Activated CD4-positive, alpha-beta T cell treated with anti-CD3 and anti-CD28 coated beads, Interleukin-2, amount 10 ng/mL, durations not matched to agents 7 days and 5 days (primary cell): ENCODE measurements at regions of chr1 and their contacts with region 1.

Region 1: GRCh38 chr1:101309334-101310311 is 72.8 kb downstream of the S1PR1 start:
- DNase-seq: peak; percentile 85
- H3K4me3 Mint-ChIP-seq: peak overlapping the region; percentile 73
- H3K27ac Mint-ChIP-seq: peak overlapping the region; percentile 98
- H3K4me1 Mint-ChIP-seq: peaks cover 75% of the 10 kb centered on the region
- H3K27me3 Mint-ChIP-seq: no peaks in the 10 kb centered on the region

Region 2: DNA sequence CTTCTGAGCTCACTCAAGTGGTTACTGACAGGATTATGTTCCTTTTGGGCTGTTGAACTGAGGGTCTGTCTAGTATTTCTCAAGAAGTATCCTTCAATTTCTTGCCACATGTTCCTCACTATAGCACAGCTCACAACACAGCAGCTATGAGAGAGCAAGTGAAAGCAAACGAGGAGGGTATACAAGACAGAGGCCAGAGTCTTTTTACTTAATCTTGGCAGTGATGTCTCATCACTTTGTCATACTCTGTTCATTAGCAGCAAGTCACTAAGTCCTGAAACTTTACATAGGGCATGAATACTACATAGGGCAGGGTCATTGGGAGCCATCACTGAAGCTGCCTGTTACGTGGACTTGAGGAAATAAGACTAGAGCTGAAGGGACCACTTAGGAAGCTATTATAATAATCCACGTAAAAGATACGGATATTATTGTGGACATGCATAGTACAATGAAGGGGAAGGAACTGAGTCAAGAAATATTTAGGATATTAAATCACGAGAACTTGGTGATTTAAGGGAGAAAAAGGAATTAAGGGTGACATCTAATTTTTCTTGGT is 350.0 kb before region 1 on chr1:
- CTCF ChIA-PET with region 1: no interaction called
- POLR2A ChIA-PET with region 1: no interaction called
- DNase-seq: no peak
- H3K4me3 Mint-ChIP-seq: no peak overlapping the region
- H3K27ac Mint-ChIP-seq: no peak overlapping the region
- H3K4me1 Mint-ChIP-seq: peaks cover 19% of the 10 kb centered on the region
- H3K27me3 Mint-ChIP-seq: no peaks in the 10 kb centered on the region

Region 3: DNA sequence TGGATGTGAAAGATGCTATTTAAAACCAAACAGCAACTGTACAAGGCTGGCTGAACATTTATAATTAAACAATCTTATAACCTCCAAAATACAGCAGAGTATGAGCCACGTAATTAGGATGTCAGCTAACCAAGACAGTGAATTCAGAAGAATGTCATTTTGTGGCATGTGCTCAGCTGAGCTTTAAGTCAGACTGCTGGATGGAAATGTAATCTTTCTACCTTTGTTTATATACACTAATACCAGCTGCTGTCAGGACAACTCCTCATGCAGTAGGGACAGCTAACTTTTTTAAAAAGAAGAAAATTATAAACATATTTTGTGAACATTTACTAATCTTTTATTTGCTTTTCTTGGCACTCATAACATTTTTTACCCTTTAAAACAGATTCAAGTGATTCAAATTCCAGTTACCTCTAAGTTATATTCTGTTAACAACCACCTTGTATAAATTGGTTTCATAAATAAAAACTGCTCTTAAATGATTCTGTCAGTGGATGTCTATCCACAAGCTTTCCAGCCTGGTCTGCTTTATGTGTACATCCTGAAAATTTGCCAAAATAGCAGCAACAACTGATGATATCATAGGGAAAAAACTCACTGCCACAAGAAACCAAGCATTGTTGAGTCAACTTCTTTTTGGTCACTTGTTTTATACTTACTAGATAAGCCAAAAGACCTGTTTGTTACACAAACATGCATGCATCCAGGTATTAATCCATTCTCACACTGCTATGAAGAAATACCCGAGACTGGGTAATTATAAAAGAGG is 320.1 kb before region 1 on chr1:
- CTCF ChIA-PET with region 1: no interaction called
- POLR2A ChIA-PET with region 1: no interaction called
- DNase-seq: no peak
- H3K4me3 Mint-ChIP-seq: no peak overlapping the region
- H3K27ac Mint-ChIP-seq: no peak overlapping the region
- H3K4me1 Mint-ChIP-seq: peaks cover 7% of the 10 kb centered on the region
- H3K27me3 Mint-ChIP-seq: no peaks in the 10 kb centered on the region

Region 4: GRCh38 chr1:101037316-101037715 is 272.3 kb before region 1 on chr1:
- CTCF ChIA-PET with region 1: no interaction called
- POLR2A ChIA-PET with region 1: no interaction called
- DNase-seq: no peak
- H3K4me3 Mint-ChIP-seq: no peak overlapping the region
- H3K27ac Mint-ChIP-seq: no peak overlapping the region
- H3K4me1 Mint-ChIP-seq: peaks cover 22% of the 10 kb centered on the region
- H3K27me3 Mint-ChIP-seq: no peaks in the 10 kb centered on the region

Region 5: DNA sequence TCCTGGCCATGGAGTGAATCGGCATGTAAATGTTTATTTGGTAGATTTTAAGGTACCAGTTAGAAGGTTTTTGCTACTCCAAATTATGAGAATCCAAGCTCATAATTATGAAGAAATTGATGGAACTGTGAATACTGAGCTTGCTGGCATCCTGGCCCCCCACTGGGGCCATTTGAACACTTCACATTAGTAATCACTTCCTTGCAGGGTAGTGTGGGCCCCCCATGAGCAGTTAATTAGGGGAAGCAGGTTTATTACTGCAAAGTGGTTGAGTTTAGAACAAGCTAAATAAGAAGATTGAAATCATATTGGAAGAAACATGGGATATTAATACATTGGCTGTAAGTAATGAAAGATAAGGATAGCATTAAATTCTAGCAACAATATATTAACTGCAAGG is 13.9 kb after region 1 on chr1:
- CTCF ChIA-PET with region 1: interaction called, 12 read pairs
- POLR2A ChIA-PET with region 1: no interaction called
- DNase-seq: no peak
- H3K4me3 Mint-ChIP-seq: no peak overlapping the region
- H3K27ac Mint-ChIP-seq: no peak overlapping the region
- H3K4me1 Mint-ChIP-seq: no peaks in the 10 kb centered on the region
- H3K27me3 Mint-ChIP-seq: peaks cover 6% of the 10 kb centered on the region

Region 6: GRCh38 chr1:101357444-101357986 is 47.9 kb after region 1 on chr1:
- CTCF ChIA-PET with region 1: interaction called, 27 read pairs
- POLR2A ChIA-PET with region 1: interaction called, 6 read pairs
- DNase-seq: peak; percentile 85
- H3K4me3 Mint-ChIP-seq: no peak overlapping the region
- H3K27ac Mint-ChIP-seq: no peak overlapping the region
- H3K4me1 Mint-ChIP-seq: peaks cover 18% of the 10 kb centered on the region
- H3K27me3 Mint-ChIP-seq: peaks cover 9% of the 10 kb centered on the region

Region 7: DNA sequence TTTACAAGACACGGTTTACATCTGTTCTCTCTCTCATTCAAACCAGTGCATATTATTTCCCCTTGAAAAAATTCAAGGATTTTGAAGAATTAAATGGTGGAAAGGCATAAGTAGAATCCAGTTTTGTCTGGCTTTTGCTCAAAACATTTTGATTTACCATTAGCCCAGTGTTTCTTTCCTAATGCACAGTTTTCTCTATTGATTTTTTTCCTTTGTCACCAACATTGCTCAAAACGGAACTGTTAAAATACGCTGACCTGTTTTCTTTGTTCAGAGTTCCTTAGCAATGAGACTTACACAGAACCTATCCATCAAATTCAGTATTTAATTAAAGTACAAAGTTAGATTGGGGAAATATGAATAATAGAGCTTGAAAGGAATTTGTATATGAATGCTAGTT is 89.6 kb after region 1 on chr1:
- CTCF ChIA-PET with region 1: no interaction called
- POLR2A ChIA-PET with region 1: no interaction called
- DNase-seq: no peak
- H3K4me3 Mint-ChIP-seq: no peak overlapping the region
- H3K27ac Mint-ChIP-seq: no peak overlapping the region
- H3K4me1 Mint-ChIP-seq: no peaks in the 10 kb centered on the region
- H3K27me3 Mint-ChIP-seq: peaks cover 19% of the 10 kb centered on the region